ENCODE measurements at regions of chr5 and their contacts with region 1.

Region 1: GRCh38 chr5:111229871-111230810 is 6.0 kb downstream of the CAMK4 start:
- DNase-seq: no peak
- H3K4me3 Mint-ChIP-seq: peak overlapping the region; percentile 77
- H3K27ac Mint-ChIP-seq: peak overlapping the region; percentile 97
- H3K4me1 Mint-ChIP-seq: peaks cover 76% of the 10 kb centered on the region
- H3K27me3 Mint-ChIP-seq: no peaks in the 10 kb centered on the region

Region 2: GRCh38 chr5:110086658-110087388 is 1143.3 kb before region 1 on chr5:
- intact Hi-C with region 1: loop called (anchors 5 kb)
- DNase-seq: peak; percentile 18
- H3K4me3 Mint-ChIP-seq: peak overlapping the region; percentile 51
- H3K27ac Mint-ChIP-seq: peak overlapping the region; percentile 89
- H3K4me1 Mint-ChIP-seq: peaks cover 31% of the 10 kb centered on the region
- H3K27me3 Mint-ChIP-seq: no peaks in the 10 kb centered on the region

Region 3: GRCh38 chr5:110751902-110752762 is 478.0 kb before region 1 on chr5:
- intact Hi-C with region 1: loop called (anchors 5 kb)
- DNase-seq: peak; percentile 37
- H3K4me3 Mint-ChIP-seq: peak overlapping the region; percentile 60
- H3K27ac Mint-ChIP-seq: peak overlapping the region; percentile 81
- H3K4me1 Mint-ChIP-seq: peaks cover 48% of the 10 kb centered on the region
- H3K27me3 Mint-ChIP-seq: no peaks in the 10 kb centered on the region

Region 4: DNA sequence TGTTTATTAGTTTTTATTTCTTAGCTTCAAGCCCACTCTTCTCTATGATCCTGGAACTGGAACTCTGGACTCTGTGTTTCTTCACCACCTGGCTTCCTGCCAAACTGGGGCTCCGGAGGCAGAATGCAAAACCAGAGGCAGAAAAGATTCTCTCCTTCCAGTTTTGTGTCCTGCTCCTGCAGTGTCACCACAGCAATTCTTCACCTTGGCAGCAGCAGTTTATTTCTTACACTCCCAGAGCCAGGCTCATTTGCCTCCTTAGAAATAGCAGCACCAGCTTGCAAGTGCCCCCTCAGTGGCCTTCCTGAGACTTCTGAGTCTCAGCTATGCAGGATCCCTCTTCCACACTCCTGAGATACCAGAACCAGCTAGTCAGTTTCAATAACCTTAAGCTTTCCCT is 32.6 kb before region 1 on chr5:
- intact Hi-C with region 1: no loop called
- DNase-seq: no peak
- H3K4me3 Mint-ChIP-seq: no peak overlapping the region
- H3K27ac Mint-ChIP-seq: no peak overlapping the region
- H3K4me1 Mint-ChIP-seq: peaks cover 6% of the 10 kb centered on the region
- H3K27me3 Mint-ChIP-seq: peaks cover 21% of the 10 kb centered on the region

Region 5: DNA sequence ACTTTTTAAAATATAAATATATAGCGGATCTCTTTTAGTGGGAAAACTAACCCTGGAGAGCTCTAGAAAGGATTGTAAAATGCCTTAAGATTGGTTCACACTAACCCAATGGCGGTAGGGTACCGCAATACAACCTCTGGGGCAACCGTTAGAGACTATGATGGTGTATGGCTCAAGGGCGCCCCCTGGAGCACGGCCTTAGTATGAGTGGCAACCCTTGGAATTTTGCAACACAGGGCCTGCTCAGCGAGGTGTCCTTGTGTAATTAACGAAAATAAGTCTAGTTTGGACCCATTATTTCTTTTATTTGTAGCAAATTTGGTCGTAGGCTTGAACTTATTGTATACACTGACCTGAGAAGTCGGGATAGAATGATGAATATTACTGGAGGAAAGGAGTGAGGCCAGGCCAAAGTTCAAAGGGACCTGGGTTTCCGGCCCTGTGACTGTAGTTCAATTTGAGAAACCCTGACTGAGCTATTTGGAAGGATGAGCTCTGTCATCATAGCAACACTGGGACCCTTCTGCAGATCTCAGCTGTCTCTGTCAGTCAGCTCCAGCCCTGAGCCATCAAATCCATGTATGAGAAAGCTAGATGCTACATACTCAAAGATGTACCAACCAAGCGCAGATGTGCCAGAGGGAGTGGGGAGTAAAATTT is 48.8 kb after region 1 on chr5:
- intact Hi-C with region 1: loop called (anchors 2 kb)
- DNase-seq: peak; percentile 74
- H3K4me3 Mint-ChIP-seq: no peak overlapping the region
- H3K27ac Mint-ChIP-seq: no peak overlapping the region
- H3K4me1 Mint-ChIP-seq: peaks cover 46% of the 10 kb centered on the region
- H3K27me3 Mint-ChIP-seq: no peaks in the 10 kb centered on the region

Region 6: DNA sequence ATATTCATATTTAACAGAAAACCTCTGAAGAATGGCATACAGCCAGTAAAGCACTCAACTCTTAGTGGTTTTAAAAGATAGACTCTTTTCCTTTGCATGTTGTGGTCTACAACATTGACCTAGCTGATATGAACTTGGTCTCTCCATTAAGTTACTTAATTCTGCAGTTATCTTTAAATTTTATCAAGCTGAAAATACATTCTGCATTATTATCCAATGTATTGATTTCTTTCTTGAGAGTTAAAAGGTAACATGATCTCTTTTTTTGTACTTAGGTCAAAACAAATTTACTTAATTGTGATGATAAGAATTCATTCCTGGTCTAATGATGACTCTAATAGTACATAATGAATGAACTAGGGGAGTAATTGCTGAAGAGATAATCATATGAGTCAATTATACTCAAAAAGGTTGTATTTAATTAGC is 149.3 kb after region 1 on chr5:
- intact Hi-C with region 1: no loop called
- DNase-seq: no peak
- H3K4me3 Mint-ChIP-seq: no peak overlapping the region
- H3K27ac Mint-ChIP-seq: no peak overlapping the region
- H3K4me1 Mint-ChIP-seq: peaks cover 3% of the 10 kb centered on the region
- H3K27me3 Mint-ChIP-seq: no peaks in the 10 kb centered on the region

Region 7: DNA sequence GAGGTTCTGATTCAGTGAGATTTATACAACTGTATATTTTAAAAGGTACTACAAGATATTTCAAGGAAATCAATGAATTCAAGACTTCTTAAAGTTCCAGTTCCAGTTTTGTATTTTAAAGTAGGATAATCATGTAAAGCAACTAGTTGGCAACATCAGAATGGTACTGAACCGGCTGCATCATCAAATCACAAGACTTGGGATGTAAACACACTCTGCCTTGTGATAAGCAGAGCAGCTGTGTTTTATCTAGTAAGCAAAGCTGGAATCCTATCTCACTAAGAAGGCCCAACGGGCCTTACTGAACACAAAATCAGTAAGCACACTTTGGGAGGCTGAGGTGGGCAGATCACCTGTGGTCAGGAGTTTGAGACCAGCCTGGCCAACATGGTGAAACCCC is 854.0 kb after region 1 on chr5:
- intact Hi-C with region 1: no loop called
- DNase-seq: no peak
- H3K4me3 Mint-ChIP-seq: no peak overlapping the region
- H3K27ac Mint-ChIP-seq: no peak overlapping the region
- H3K4me1 Mint-ChIP-seq: no peaks in the 10 kb centered on the region
- H3K27me3 Mint-ChIP-seq: no peaks in the 10 kb centered on the region

Region 8: DNA sequence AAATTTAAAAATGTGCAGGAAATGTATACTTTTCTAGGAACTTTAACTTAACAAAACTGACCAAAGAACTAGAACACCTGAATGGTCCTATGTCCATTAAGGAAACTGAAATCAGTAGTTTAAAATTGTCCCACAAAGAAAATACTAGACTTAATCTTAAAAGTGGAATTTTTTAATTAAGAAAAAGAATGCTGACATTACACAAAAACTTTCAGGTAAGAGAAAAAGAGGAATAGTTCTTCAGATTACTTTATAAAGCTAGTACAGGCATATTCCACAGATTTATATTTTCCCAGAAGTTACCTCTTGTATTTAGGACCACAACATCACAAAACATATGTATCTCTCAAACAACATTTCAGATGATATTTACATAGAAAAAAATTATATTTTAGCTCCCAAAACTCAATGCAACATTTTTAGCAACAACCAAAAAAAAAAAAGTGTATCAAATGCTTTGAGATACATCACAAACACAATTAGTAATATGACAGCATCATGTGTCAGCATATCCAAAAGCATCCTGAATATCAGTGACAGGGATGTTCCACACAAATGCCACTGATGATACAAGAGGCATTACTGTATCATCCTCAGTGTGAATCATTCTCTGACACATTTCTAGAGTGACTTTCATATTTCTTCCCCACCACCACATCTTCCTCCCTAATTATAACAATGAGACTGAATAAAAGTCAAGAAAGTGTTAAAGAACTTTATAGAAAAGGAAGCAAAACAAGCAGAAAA is 925.0 kb after region 1 on chr5:
- intact Hi-C with region 1: loop called (anchors 5 kb)
- DNase-seq: no peak
- H3K4me3 Mint-ChIP-seq: no peak overlapping the region
- H3K27ac Mint-ChIP-seq: peak overlapping the region; percentile 68
- H3K4me1 Mint-ChIP-seq: peaks cover 12% of the 10 kb centered on the region
- H3K27me3 Mint-ChIP-seq: peaks cover 7% of the 10 kb centered on the region

Measured in activated T-helper 2 cell treated with anti-CD3 and anti-CD28 coated beads, Interferon-gamma antibody, Interleukin-2, Interleukin-4, amounts not matched to agents 10 μg/mL and 5 μg/mL and 100 μg/mL, durations not matched to agents 14 hours and 24 hours and 36 hours (primary cell).